ENCODE measurements at regions of chr10 and their contacts with region 1.

Region 1: GRCh38 chr10:129847741-129848483 is 116.2 kb downstream of the EBF3 start:
- DNase-seq: no peak
- ATAC-seq: no peak
- H3K4me3 ChIP-seq: no peak overlapping the region
- H3K27ac ChIP-seq: no peak overlapping the region
- H3K4me1 ChIP-seq: no peaks in the 10 kb centered on the region
- H3K27me3 ChIP-seq: no peaks in the 10 kb centered on the region
- CTCF ChIP-seq: no peak
- POLR2A ChIP-seq: no peak
- RAD21 ChIP-seq: no peak

Region 2: DNA sequence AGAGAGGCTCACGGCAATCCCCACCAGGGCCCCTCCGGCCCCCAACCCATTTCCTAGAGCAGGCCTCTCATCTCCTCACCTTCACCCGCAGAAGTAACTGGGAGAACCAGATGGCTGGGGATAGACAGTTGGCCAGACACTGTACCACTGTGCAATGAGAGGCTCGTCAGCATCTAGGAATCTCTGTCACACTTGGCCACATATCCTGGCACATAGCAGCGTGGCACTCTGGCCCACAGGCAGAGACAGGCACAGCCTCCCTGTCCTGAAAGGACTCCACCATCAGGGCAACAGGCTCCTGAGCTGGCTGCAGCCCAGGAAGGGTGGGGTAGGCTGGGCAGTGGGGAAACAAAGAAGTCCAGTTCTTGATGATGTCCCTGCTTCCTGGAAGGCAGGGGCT is 216.9 kb after region 1 on chr10:
- CTCF ChIA-PET with region 1: interaction called, 10 read pairs
- POLR2A ChIA-PET with region 1: no interaction called
- dilution Hi-C with region 1: no loop called
- in situ Hi-C with region 1: no loop called
- intact Hi-C with region 1: no loop called
- DNase-seq: no peak
- ATAC-seq: no peak
- H3K4me3 ChIP-seq: no peak overlapping the region
- H3K27ac ChIP-seq: no peak overlapping the region
- H3K4me1 ChIP-seq: no peaks in the 10 kb centered on the region
- H3K27me3 ChIP-seq: no peaks in the 10 kb centered on the region
- CTCF ChIP-seq: no peak
- POLR2A ChIP-seq: no peak
- RAD21 ChIP-seq: no peak